BJ (cell line): ENCODE measurements at regions of chr2 and their contacts with region 1.

Region 1: GRCh38 chr2:160252278-160252887 is 52.3 kb upstream of the ITGB6 start:
- DNase-seq: no peak
- H3K4me3 ChIP-seq: no peak overlapping the region
- H3K27me3 ChIP-seq: no peaks in the 10 kb centered on the region
- CTCF ChIP-seq: peak; percentile 73

Region 2: DNA sequence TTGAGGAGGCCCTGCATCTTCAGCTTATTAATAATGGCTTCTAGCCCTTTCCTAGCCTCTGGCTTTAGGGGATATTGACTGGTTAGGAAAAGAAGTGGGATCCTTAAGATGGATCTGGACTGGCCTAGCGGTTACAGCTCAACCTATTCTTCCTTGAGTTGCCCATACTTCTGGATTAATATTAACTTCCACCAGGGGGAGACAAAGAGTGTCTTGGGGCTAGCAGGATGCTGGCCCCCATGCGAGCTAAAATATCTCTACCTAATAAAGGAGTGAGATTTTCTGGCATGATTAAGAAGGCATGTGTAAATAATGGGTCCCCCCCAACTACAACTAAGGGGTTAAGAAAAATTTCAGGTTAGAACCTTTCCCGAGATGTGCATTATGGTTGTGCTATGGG is 166.7 kb before region 1 on chr2:
- CTCF ChIA-PET with region 1: no interaction called
- POLR2A ChIA-PET with region 1: no interaction called
- DNase-seq: no peak
- H3K4me3 ChIP-seq: no peak overlapping the region
- H3K27me3 ChIP-seq: no peaks in the 10 kb centered on the region
- CTCF ChIP-seq: 0 out of 2 replicates have a peak, but pooled peaks have one; percentile 19

Region 3: GRCh38 chr2:160210599-160211138 is 41.7 kb before region 1 on chr2:
- CTCF ChIA-PET with region 1: interaction called, 11 read pairs
- POLR2A ChIA-PET with region 1: no interaction called
- DNase-seq: no peak
- H3K4me3 ChIP-seq: no peak overlapping the region
- H3K27me3 ChIP-seq: no peaks in the 10 kb centered on the region
- CTCF ChIP-seq: peak; percentile 56

Region 4: GRCh38 chr2:160241251-160242137 is 10.9 kb before region 1 on chr2:
- CTCF ChIA-PET with region 1: interaction called, 20 read pairs
- POLR2A ChIA-PET with region 1: no interaction called
- DNase-seq: no peak
- H3K4me3 ChIP-seq: no peak overlapping the region
- H3K27me3 ChIP-seq: no peaks in the 10 kb centered on the region
- CTCF ChIP-seq: no peak

Region 5: DNA sequence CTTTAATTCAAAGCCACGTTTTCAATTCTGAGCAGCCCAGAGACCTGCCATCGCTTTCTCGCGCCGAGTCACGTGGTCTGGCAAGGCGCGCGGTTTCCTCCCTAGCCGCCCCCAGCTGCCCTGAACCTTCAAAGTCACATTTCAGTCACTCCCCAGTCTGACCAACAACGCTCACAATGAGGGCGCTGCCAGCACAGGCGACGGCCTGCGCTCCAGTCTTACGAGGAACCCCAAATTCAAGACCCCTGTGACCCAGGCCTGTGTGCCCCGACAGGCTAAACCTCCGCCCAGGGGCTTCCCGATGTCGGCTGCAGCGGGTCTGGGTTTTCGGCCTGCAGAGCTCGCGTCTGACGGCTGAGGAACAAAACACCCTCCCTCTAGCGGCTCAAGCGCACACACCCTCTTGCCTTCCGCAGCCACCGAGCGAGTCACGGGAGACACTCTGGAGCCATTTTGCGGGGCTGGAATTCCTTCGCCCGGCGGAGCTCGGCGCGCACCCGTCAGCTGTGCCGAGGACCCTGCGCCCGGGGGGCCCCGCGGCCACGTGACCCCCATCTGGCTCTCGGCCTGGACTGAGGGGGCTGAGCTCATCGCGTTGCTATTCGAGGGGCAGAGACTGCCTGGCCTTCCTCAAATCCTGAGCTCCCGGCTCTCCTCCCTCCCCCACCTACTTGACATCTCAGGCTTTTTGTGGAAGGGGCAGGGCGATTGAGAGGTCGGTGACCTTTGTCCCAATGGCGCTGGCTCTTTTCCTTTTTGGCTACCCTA is 17.6 kb after region 1 on chr2:
- CTCF ChIA-PET with region 1: interaction called, 16 read pairs
- POLR2A ChIA-PET with region 1: no interaction called
- DNase-seq: peak; percentile 74
- H3K4me3 ChIP-seq: peak overlapping the region; percentile 39
- H3K27me3 ChIP-seq: no peaks in the 10 kb centered on the region
- CTCF ChIP-seq: peak; percentile 78

Region 6: GRCh38 chr2:160299540-160299939 is 47.2 kb after region 1 on chr2:
- CTCF ChIA-PET with region 1: no interaction called
- POLR2A ChIA-PET with region 1: no interaction called
- DNase-seq: no peak
- H3K4me3 ChIP-seq: no peak overlapping the region
- H3K27me3 ChIP-seq: no peaks in the 10 kb centered on the region
- CTCF ChIP-seq: no peak

Region 7: DNA sequence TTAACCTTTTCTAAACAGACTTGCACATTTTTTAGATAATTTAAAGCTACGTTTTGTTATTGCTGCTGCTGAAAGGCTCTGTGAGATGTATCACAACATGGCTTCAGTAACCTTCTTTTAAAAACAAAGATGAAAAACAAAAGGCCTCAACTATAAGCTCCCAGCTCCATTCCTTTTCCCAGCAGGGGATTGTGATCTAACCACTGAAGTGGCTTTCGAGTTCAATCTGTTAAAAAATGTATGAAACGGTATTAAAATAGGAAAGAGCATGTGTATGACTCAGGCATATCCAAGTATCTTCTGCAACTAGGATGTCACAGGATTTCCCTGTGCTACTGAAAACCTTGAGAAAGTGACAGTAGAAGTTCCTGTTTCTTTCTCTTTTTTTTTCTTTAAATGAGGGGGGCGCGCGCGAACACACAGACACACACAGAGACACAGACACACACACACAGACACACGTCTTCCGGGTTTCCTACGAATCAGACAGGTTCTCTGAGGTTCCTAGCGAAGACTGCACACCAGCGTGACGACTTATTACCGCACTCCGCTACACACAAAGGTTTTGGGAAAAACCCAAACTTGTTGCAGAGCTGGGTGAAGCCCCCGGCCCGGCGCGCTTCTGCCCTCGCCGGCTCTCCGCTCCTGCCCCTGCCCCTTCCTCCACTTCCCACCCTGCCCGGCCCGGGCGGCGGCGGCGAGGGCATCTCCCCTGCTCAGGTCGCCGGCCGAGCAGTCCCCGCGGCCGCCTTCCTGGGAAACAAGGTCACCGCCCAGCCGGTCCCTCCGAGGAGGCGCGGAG is 154.4 kb after region 1 on chr2:
- CTCF ChIA-PET with region 1: no interaction called
- POLR2A ChIA-PET with region 1: no interaction called
- DNase-seq: no peak
- H3K4me3 ChIP-seq: peak overlapping the region; percentile 76
- H3K27me3 ChIP-seq: no peaks in the 10 kb centered on the region
- CTCF ChIP-seq: no peak